Activated T-helper 1 cell treated with anti-CD3 and anti-CD28 coated beads, Interleukin-12 subunit alpha, Interleukin-12 subunit beta, Interleukin-2, Interleukin-4 antibody, amounts not matched to agents 30 ng/mL and 10 ng/mL and 1 ng/mL, durations not matched to agents 14 hours and 24 hours and 36 hours (primary cell): ENCODE measurements at regions of chr2 and their contacts with region 1.

Region 1: DNA sequence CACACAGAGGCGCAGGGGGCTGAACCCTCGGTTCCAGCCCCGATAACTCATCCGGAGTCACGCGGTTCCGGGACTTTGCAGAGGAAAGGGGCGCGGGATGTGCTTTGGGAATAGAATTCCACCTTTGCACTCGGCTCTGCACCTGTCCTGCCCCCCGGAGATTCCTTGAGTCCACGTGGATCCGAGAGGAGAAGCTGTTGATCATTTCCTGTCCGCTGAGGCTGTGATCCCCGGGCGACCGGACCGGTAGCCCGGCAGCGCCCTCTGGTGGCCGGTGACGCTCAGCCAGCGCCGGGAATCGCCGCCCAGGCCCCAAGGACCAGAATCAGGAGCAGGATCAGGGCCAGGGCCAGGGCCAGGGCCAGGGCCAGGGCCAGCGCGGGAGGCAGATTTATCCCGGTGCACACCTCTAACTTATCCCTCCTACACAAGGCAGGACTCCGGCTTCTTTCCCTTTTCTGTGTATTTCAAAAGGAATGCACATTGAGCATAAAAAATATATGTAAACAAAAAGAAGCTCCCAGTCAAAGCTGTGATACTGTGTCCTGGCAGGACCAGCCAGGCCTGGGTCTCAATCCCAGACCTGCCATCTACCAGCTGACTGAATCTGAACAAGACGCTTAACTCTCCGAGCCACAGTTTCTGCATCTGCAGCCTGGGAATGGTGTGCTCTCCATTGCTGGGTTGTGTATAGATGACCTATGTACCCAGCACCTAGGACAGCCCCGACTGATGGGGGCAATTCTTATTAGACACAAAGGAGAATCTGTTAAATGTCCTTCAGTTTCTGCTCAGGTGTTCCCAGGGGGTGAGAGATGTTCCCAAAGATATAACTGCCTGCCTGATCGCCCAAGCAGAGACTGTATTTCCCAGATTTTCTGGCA is 8.5 kb upstream of the SPATA3 start:
- DNase-seq: peak; percentile 68
- H3K4me3 Mint-ChIP-seq: peak overlapping the region; percentile 26
- H3K27ac Mint-ChIP-seq: no peak overlapping the region
- H3K4me1 Mint-ChIP-seq: peaks cover 35% of the 10 kb centered on the region
- H3K27me3 Mint-ChIP-seq: peaks cover 39% of the 10 kb centered on the region

Region 2: GRCh38 chr2:230202430-230203109 is 784.8 kb before region 1 on chr2:
- intact Hi-C with region 1: no loop called
- DNase-seq: no peak
- H3K4me3 Mint-ChIP-seq: no peak overlapping the region
- H3K27ac Mint-ChIP-seq: peak overlapping the region; percentile 15
- H3K4me1 Mint-ChIP-seq: peaks cover 29% of the 10 kb centered on the region
- H3K27me3 Mint-ChIP-seq: no peaks in the 10 kb centered on the region

Region 3: DNA sequence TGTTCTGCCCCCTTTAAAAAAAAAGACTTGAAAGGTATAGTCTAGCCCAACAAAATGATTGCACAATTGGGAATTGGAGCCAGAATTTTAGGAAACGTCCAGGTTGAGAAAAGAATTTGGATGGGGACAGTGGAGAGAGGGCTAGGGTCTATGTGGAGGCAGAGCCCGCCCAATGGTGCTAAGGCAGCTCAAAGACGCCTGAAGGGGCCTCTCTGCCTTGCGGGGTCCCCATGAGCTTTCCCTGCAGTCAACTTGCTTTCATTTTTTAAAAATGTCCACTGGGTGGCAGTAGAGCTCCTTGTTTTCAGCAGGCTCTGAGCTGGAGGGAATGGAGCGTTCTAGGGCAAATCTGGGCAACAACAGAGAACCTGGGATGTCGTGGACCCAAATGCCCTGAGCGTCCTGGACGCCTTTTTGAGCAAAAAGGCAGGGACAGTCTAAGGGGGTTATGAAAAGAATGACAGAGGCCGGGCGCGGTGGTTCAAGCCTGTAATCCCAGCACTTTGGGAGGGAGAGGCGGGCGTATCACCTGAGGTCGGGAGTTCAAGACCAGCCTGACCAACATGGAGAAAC is 162.9 kb before region 1 on chr2:
- intact Hi-C with region 1: loop called (anchors 1 kb)
- DNase-seq: peak; percentile 42
- H3K4me3 Mint-ChIP-seq: peak overlapping the region; percentile 37
- H3K27ac Mint-ChIP-seq: no peak overlapping the region
- H3K4me1 Mint-ChIP-seq: peaks cover 23% of the 10 kb centered on the region
- H3K27me3 Mint-ChIP-seq: peaks cover 35% of the 10 kb centered on the region

Region 4: DNA sequence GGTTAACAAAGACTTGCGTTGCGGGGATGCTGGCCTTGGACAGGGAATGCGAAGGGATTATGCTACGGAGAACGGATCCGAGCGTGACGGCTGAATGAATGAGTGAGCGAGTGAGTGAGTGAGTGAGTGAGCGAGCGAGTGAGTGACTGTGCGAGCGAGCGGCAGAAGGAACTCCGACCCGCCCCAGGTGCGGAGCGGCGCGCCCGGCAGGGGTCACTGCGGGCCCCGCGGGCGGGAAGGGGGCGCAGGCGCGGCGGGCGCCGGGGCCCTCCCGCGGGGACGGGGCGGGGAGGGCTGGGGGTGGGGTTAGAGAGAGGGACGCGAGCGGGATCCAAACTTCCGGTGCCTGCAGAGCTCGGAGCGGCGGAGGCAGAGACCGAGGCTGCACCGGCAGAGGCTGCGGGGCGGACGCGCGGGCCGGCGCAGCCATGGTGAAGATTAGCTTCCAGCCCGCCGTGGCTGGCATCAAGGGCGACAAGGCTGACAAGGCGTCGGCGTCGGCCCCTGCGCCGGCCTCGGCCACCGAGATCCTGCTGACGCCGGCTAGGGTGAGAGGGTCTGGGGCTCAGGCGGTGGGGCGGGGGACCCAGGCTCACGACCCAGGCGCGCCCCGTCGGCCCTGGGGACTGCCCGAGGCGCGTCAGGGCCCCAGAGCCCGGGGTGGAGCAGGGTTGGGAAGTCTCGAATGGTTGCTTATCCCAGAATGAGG is 122.6 kb before region 1 on chr2 and contains the start of gene ITM2C:
- intact Hi-C with region 1: loop called (anchors 1 kb)
- DNase-seq: peak; percentile 61
- H3K4me3 Mint-ChIP-seq: peak within 1 kb of the TSS; percentile 90
- H3K27ac Mint-ChIP-seq: peak within 1 kb of the TSS; percentile 71
- H3K4me1 Mint-ChIP-seq: peaks cover 24% of the 10 kb centered on the region
- H3K27me3 Mint-ChIP-seq: peaks cover 61% of the 10 kb centered on the region
- total RNA-seq, gene ITM2C: 4.2 and 5.2 TPM in 2 replicates

Region 5: GRCh38 chr2:230908595-230909191 is 78.7 kb before region 1 on chr2:
- intact Hi-C with region 1: loop called (anchors 1 kb)
- DNase-seq: no peak
- H3K4me3 Mint-ChIP-seq: no peak overlapping the region
- H3K27ac Mint-ChIP-seq: peak overlapping the region; percentile 29
- H3K4me1 Mint-ChIP-seq: peaks cover 41% of the 10 kb centered on the region
- H3K27me3 Mint-ChIP-seq: peaks cover 59% of the 10 kb centered on the region

Region 6: DNA sequence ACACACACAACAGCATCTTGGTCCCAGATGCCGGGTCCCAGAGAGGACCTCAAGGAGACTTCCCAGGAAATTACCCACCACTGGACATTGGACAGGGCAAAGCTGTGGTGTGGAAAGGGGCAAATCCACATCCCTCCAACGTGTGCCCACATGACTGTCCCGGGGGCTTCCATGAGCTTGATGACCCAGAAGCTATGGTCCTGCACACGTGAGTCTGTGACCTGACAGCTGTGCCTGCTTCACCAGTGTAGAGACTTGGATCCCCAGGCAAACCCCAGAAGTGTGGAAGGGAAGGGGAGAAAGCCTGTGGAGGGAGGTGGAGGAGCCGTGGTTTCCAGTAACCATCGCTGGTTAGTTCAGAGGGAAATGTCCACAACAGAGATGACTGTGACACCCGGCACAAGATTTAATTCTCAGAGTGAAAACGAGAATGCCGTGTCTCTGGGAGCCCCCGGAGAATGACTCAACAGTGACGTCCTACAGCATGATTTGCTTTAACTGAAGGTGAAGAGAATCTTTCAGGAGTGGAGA is 43.2 kb before region 1 on chr2:
- intact Hi-C with region 1: loop called (anchors 1 kb)
- DNase-seq: no peak
- H3K4me3 Mint-ChIP-seq: no peak overlapping the region
- H3K27ac Mint-ChIP-seq: no peak overlapping the region
- H3K4me1 Mint-ChIP-seq: peaks cover 14% of the 10 kb centered on the region
- H3K27me3 Mint-ChIP-seq: peaks cover 47% of the 10 kb centered on the region

Region 7: GRCh38 chr2:230974096-230974913 is 13.1 kb before region 1 on chr2:
- intact Hi-C with region 1: loop called (anchors 1 kb)
- DNase-seq: peak; percentile 51
- H3K4me3 Mint-ChIP-seq: peak overlapping the region; percentile 29
- H3K27ac Mint-ChIP-seq: peak overlapping the region; percentile 54
- H3K4me1 Mint-ChIP-seq: peaks cover 24% of the 10 kb centered on the region
- H3K27me3 Mint-ChIP-seq: peaks cover 35% of the 10 kb centered on the region

Region 8: GRCh38 chr2:231545105-231545902 is 557.9 kb after region 1 on chr2:
- intact Hi-C with region 1: loop called (anchors 10 kb)
- DNase-seq: peak; percentile 76
- H3K4me3 Mint-ChIP-seq: peak overlapping the region; percentile 79
- H3K27ac Mint-ChIP-seq: peak overlapping the region; percentile 96
- H3K4me1 Mint-ChIP-seq: peaks cover 45% of the 10 kb centered on the region
- H3K27me3 Mint-ChIP-seq: peaks cover 5% of the 10 kb centered on the region